ENCODE measurements at regions of chr16 and their contacts with region 1.

Region 1: DNA sequence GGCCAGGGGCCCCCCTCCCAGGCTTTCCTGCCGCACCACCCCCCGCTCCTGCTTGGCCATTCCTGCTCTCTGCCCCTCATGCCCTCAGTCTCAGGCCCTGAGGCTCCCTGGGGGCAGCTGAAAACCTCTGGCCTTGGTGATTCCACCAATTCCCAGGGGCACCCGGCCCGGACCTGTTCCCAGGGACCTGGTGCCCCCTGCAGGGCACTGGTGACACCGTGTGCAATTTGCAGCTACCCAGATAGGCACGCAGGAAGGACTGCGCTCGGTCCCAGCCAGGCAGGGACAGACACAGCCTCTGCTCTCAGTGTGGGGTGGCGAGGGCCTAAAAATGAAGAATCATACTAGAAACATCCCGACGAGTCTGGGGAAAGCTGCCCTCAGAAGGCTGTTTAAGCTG is 13.4 kb downstream of the WFDC1 start:
- DNase-seq: peak; percentile 87
- H3K4me3 ChIP-seq: no peak overlapping the region
- H3K27ac ChIP-seq: peak overlapping the region in 3 of 4 donors; percentile 15 to 94 (median 55)
- H3K4me1 ChIP-seq: peaks cover 0 to 52% (median 43%) of the 10 kb centered on the region in 4 donors
- H3K27me3 ChIP-seq: no peaks in the 10 kb centered on the region
- CTCF ChIP-seq: peak in 3 of 4 experiments; percentile 60 to 76 (median 68)
- EP300 ChIP-seq: no peak
- POLR2A ChIP-seq: no peak

Region 2: GRCh38 chr16:84277237-84277823 is 30.8 kb before region 1 on chr16:
- intact Hi-C with region 1: loop called (anchors 1 kb)
- DNase-seq: peak; percentile 80
- H3K4me3 ChIP-seq: no peak overlapping the region
- H3K27ac ChIP-seq: no peak overlapping the region
- H3K4me1 ChIP-seq: peaks cover 0 to 5% (median 0%) of the 10 kb centered on the region in 4 donors
- H3K27me3 ChIP-seq: no peaks in the 10 kb centered on the region
- CTCF ChIP-seq: peak; percentile 82 to 93 (median 88)
- EP300 ChIP-seq: no peak
- POLR2A ChIP-seq: no peak